CD8-positive, alpha-beta T cell (primary cell): ENCODE measurements at regions of chr3 and their contacts with region 1.

Region 1: DNA sequence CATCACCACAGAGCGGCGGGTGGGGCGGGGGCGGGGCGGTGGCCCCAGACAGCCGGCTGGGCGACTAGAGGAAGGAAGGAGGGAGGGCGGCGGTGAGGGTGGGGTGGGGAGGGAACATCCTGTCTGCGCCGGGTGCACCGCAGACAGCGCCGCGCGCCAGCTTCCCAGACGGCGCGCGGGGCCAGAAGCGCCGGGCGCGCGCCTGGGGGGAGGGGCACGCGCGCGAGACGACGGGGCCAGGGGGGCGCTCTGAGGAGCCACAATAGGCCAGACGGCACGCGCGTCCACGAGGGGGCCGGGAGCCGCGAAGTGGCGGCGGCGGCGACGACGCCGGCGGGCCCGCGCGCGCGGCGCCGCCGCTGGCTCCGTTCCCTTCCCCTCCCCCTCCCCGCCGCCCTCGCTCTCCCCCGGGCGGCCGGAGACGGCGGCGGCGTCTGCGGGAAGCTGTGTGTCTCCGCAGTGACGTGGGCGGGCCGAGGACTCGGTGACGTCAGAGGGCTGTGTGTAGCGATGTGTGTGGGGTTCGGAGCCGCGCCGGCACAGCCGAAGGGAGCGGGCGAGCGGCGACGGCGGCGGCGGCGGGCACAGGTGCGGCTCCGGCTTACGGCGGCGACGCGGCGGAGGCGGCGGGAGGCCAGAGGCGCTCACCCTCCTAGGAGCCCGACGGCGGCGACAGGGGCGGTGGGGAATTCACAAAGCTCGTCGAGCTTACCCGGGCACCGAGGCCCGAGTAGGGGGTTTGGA is at the start of gene SKIL:
- DNase-seq: peak; percentile 94 to 99 (median 97)
- ATAC-seq: peak; percentile 69
- H3K4me3 ChIP-seq: peak within 1 kb of the TSS; percentile 55 to 76
- H3K4me3 Mint-ChIP-seq: peak within 1 kb of the TSS; percentile 95
- H3K27ac ChIP-seq: peak within 1 kb of the TSS; percentile 91 to 96
- H3K27ac Mint-ChIP-seq: peak within 1 kb of the TSS; percentile 99
- H3K4me1 ChIP-seq: peaks cover 24% of the 10 kb centered on the region
- H3K4me1 Mint-ChIP-seq: peaks cover 52% of the 10 kb centered on the region
- H3K27me3 ChIP-seq: no peaks in the 10 kb centered on the region
- H3K27me3 Mint-ChIP-seq: no peaks in the 10 kb centered on the region
- CTCF ChIP-seq: no peak
- total RNA-seq, gene SKIL: 160 to 177 TPM

Region 2: GRCh38 chr3:169984292-169984691 is 373.1 kb before region 1 on chr3:
- CTCF ChIA-PET with region 1: no interaction called
- POLR2A ChIA-PET with region 1: no interaction called
- intact Hi-C with region 1: no loop called
- DNase-seq: no peak
- ATAC-seq: no peak
- H3K4me3 ChIP-seq: no peak overlapping the region
- H3K4me3 Mint-ChIP-seq: no peak overlapping the region
- H3K27ac ChIP-seq: no peak overlapping the region
- H3K27ac Mint-ChIP-seq: no peak overlapping the region
- H3K4me1 ChIP-seq: no peaks in the 10 kb centered on the region
- H3K4me1 Mint-ChIP-seq: peaks cover 4% of the 10 kb centered on the region
- H3K27me3 ChIP-seq: no peaks in the 10 kb centered on the region
- H3K27me3 Mint-ChIP-seq: no peaks in the 10 kb centered on the region
- CTCF ChIP-seq: no peak

Region 3: GRCh38 chr3:170221924-170222646 is 135.3 kb before region 1 on chr3 and contains the start of gene PRKCI:
- CTCF ChIA-PET with region 1: no interaction called
- POLR2A ChIA-PET with region 1: interaction called, 14 read pairs
- intact Hi-C with region 1: loop called (anchors 1 kb)
- DNase-seq: peak; percentile 75 to 94 (median 86)
- ATAC-seq: peak; percentile 83
- H3K4me3 ChIP-seq: peak within 1 kb of the TSS; percentile 64 to 92
- H3K4me3 Mint-ChIP-seq: peak within 1 kb of the TSS; percentile 91
- H3K27ac ChIP-seq: peak within 1 kb of the TSS; percentile 76 to 82
- H3K27ac Mint-ChIP-seq: peak within 1 kb of the TSS; percentile 93
- H3K4me1 ChIP-seq: peaks cover 3% of the 10 kb centered on the region
- H3K4me1 Mint-ChIP-seq: peaks cover 36% of the 10 kb centered on the region
- H3K27me3 ChIP-seq: no peaks in the 10 kb centered on the region
- H3K27me3 Mint-ChIP-seq: no peaks in the 10 kb centered on the region
- CTCF ChIP-seq: no peak
- total RNA-seq, gene PRKCI: 17.6 to 20.2 TPM

Region 4: DNA sequence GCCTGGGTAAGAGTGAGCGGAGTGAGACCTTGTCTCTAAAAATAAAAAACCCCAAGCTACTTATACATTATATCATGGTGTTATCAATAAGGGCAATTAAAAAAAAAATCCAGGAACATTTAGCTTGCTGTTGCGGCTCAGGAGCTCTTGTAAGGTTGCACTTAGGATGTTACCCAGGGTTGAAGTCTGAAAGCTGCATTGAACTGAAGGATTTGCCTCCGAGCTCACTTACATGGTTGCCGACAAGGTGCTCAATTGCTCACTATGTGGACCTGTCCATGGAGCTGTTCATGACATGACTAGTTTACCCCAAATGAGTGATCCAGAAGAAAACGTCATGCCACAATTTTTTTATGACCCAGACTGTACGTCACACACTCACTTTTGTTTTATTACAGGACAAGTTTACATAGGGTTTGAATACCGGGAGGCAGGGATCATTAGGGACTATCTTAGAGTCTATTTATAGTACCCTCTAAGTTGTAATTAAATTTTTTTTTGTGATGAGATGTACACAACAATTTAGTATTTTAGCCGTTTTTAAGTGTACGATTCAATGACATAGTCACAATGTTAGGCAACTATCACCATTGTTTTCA is 40.3 kb after region 1 on chr3:
- CTCF ChIA-PET with region 1: no interaction called
- POLR2A ChIA-PET with region 1: no interaction called
- intact Hi-C with region 1: no loop called
- DNase-seq: no peak
- ATAC-seq: no peak
- H3K4me3 ChIP-seq: no peak overlapping the region
- H3K4me3 Mint-ChIP-seq: no peak overlapping the region
- H3K27ac ChIP-seq: no peak overlapping the region
- H3K27ac Mint-ChIP-seq: no peak overlapping the region
- H3K4me1 ChIP-seq: no peaks in the 10 kb centered on the region
- H3K4me1 Mint-ChIP-seq: no peaks in the 10 kb centered on the region
- H3K27me3 ChIP-seq: no peaks in the 10 kb centered on the region
- H3K27me3 Mint-ChIP-seq: no peaks in the 10 kb centered on the region
- CTCF ChIP-seq: no peak